ENCODE measurements at regions of chr4 and their contacts with region 1.

Region 1: DNA sequence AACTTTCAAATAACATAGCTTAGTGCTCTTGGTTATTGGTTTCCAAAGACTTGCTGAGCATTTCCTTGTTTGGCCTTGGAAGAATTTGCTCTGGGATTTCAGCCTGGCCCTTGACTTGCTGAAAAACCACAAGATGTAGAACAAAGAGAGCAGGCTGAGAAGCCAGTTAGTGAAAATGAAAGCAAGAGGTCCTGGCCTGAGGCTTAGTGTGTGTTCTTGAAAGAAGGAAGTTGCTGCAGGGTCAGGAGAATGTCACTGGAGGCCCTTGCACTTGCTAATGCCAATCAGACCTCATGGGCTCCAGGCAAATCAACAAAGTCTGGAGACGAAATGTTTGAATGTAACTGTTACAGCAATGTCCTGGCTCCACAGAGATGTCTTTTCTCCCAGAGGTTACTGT is 79.4 kb downstream of the SYNPO2 start:
- DNase-seq: peak in 1 of 2 donors; percentile 58
- ATAC-seq: peak; percentile 70 to 85 (median 77)
- H3K4me3 ChIP-seq: peak overlapping the region in 3 of 10 donors; percentile 6 to 19 (median 10)
- H3K27ac ChIP-seq: peak overlapping the region; percentile 14 to 83 (median 75)
- H3K4me1 ChIP-seq: peaks cover 22 to 91% (median 60%) of the 10 kb centered on the region in 9 donors
- H3K27me3 ChIP-seq: no peaks in the 10 kb centered on the region
- CTCF ChIP-seq: no peak

Region 2: GRCh38 chr4:118254368-118254767 is 713.6 kb before region 1 on chr4:
- intact Hi-C with region 1: no loop called
- DNase-seq: no peak
- ATAC-seq: no peak
- H3K4me3 ChIP-seq: no peak overlapping the region
- H3K27ac ChIP-seq: no peak overlapping the region
- H3K4me1 ChIP-seq: no peaks in the 10 kb centered on the region
- H3K27me3 ChIP-seq: no peaks in the 10 kb centered on the region
- CTCF ChIP-seq: no peak

Region 3: DNA sequence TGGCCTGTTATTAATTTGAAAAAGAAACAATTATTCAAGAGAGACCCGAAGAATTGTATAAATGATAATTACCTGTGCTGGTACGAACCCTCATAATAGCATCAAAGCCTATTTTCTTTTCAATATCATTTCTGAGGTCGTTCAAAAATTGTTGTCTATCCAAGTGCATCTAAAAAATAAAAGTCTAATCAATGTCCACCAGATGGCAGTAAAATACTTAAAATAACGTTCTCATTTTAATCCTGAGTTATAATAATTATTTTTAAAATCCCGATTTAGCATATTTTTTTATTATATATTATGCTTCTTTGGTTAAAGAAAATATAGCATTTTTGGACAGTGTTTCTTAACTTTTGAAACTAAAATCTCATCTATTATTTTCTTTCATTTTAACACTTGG is 227.1 kb before region 1 on chr4:
- intact Hi-C with region 1: loop called in 9 of 10 experiments (anchors 1 to 10 kb)
- DNase-seq: no peak
- ATAC-seq: peak in 2 of 8 donors; percentile 36 to 57
- H3K4me3 ChIP-seq: peak overlapping the region in 5 of 10 donors; percentile 4 to 20 (median 15)
- H3K27ac ChIP-seq: peak overlapping the region in 9 of 10 donors; percentile 11 to 82 (median 64)
- H3K4me1 ChIP-seq: peaks cover 3 to 32% (median 20%) of the 10 kb centered on the region in 9 donors
- H3K27me3 ChIP-seq: no peaks in the 10 kb centered on the region
- CTCF ChIP-seq: peak; percentile 21 to 70 (median 54)

Region 4: DNA sequence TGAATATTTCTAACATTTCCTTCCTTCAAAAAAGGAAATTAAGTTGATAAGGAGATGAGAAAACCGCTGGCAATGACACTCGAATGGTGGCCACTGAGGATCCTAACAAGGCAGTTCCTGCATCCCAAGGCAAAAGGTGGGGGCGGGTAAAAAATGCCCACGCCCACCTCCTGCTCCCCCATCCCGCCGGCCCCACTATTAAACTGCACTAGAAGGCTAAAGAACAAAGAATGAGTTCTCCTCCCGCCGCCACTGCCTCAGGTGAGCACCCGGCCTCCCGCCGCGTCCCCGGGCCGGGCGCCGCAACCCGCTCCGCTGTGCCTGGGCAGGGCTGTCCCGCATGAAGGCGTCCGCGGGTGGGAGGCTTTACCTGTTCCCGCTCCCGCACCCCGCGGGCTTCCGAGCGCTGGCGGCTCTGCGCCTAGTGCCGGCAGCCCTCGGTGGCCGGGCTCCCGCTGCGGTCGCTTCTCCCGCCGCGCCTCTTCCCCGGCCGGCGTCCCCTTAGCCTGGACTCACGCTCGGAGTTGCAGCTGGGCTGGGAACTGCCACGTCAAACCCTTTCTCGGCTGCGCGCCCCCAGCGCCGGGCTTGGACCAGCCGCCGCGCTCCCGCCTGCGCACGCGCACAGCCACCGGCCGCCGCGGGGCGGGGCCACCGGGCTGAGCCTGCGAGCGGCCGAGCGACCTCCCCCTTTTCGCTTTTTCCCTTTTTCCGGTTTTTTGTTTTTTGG is 132.3 kb before region 1 on chr4 and contains the start of gene SEC24D:
- intact Hi-C with region 1: loop called in 1 of 10 experiments (anchors 5 kb)
- DNase-seq: peak; percentile 89 to 92
- ATAC-seq: peak; percentile 91 to 98 (median 96)
- H3K4me3 ChIP-seq: peak within 1 kb of the TSS; percentile 63 to 99 (median 91)
- H3K27ac ChIP-seq: peak within 1 kb of the TSS; percentile 72 to 99 (median 95)
- H3K4me1 ChIP-seq: peaks cover 0 to 47% (median 26%) of the 10 kb centered on the region in 9 donors
- H3K27me3 ChIP-seq: no peaks in the 10 kb centered on the region
- CTCF ChIP-seq: peak in 4 of 9 donors; percentile 5 to 35 (median 17)
- total RNA-seq, gene SEC24D: 7.8 to 24.4 (median 12.1) TPM

Region 5: DNA sequence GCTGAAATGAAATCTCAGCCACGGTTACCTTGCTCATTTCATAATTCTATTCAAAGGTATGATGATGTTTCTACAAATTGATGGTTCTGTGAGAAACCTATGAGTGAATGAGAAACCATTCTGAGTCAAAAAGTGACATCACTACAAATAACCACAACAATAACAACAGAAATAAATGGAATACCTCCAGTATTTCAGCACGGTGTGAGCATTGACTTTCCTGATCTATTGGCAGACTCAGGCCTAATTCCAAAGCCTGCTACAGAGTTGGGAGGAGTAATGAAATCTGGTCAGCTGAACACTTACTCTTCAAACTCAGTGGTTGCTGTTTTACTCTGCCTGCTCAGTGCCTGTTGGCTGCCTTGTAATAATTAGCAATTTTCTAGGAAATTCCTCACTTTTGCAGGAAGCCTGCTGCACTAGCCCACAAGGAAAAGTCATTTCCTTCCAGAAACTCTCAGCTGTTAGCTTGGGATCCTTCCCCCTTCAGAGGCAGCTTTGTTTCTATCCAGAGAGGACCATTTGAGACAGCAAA is 98.1 kb before region 1 on chr4:
- intact Hi-C with region 1: no loop called
- DNase-seq: peak in 1 of 2 donors; percentile 25
- ATAC-seq: peak; percentile 37 to 86 (median 70)
- H3K4me3 ChIP-seq: no peak overlapping the region
- H3K27ac ChIP-seq: peak overlapping the region in 5 of 10 donors; percentile 6 to 42 (median 35)
- H3K4me1 ChIP-seq: peaks cover 2 to 27% (median 15%) of the 10 kb centered on the region in 9 donors
- H3K27me3 ChIP-seq: no peaks in the 10 kb centered on the region
- CTCF ChIP-seq: no peak

Region 6: GRCh38 chr4:118898684-118899138 is 69.3 kb before region 1 on chr4:
- intact Hi-C with region 1: loop called in 2 of 10 experiments (anchors 5 to 10 kb)
- DNase-seq: peak; percentile 54 to 62
- ATAC-seq: peak; percentile 64 to 94 (median 86)
- H3K4me3 ChIP-seq: peak overlapping the region in 2 of 10 donors; percentile 4 to 7
- H3K27ac ChIP-seq: peak overlapping the region; percentile 38 to 93 (median 82)
- H3K4me1 ChIP-seq: peaks cover 4 to 85% (median 39%) of the 10 kb centered on the region in 9 donors
- H3K27me3 ChIP-seq: no peaks in the 10 kb centered on the region
- CTCF ChIP-seq: no peak

Region 7: GRCh38 chr4:118918388-118918787 is 49.6 kb before region 1 on chr4:
- intact Hi-C with region 1: loop called in 2 of 10 experiments (anchors 2 to 5 kb)
- DNase-seq: no peak
- ATAC-seq: peak in 2 of 8 donors; percentile 30 to 31
- H3K4me3 ChIP-seq: peak overlapping the region in 2 of 10 donors; percentile 2 to 7
- H3K27ac ChIP-seq: peak overlapping the region in 8 of 10 donors; percentile 61 to 89 (median 76)
- H3K4me1 ChIP-seq: peaks cover 10 to 75% (median 50%) of the 10 kb centered on the region in 9 donors
- H3K27me3 ChIP-seq: no peaks in the 10 kb centered on the region
- CTCF ChIP-seq: no peak

Region 8: GRCh38 chr4:119152741-119153140 is 184.7 kb after region 1 on chr4:
- intact Hi-C with region 1: no loop called
- DNase-seq: no peak
- ATAC-seq: no peak
- H3K4me3 ChIP-seq: no peak overlapping the region
- H3K27ac ChIP-seq: peak overlapping the region in 3 of 10 donors; percentile 9 to 79 (median 18)
- H3K4me1 ChIP-seq: peaks cover 0 to 69% (median 15%) of the 10 kb centered on the region in 9 donors
- H3K27me3 ChIP-seq: no peaks in the 10 kb centered on the region
- CTCF ChIP-seq: no peak

Measured in heart right ventricle (tissue), 16 donors.